ENCODE measurements at regions of chr20 and their contacts with region 1.

Region 1: GRCh38 chr20:48828022-48828743 is 384 bp upstream of the PREX1 start:
- DNase-seq: peak; percentile 78
- ATAC-seq: peak; percentile 14
- H3K4me3 Mint-ChIP-seq: peak overlapping the region; percentile 66
- H3K27ac Mint-ChIP-seq: peak overlapping the region; percentile 57
- H3K4me1 Mint-ChIP-seq: peaks cover 38% of the 10 kb centered on the region
- H3K27me3 Mint-ChIP-seq: peaks cover 21% of the 10 kb centered on the region

Region 2: DNA sequence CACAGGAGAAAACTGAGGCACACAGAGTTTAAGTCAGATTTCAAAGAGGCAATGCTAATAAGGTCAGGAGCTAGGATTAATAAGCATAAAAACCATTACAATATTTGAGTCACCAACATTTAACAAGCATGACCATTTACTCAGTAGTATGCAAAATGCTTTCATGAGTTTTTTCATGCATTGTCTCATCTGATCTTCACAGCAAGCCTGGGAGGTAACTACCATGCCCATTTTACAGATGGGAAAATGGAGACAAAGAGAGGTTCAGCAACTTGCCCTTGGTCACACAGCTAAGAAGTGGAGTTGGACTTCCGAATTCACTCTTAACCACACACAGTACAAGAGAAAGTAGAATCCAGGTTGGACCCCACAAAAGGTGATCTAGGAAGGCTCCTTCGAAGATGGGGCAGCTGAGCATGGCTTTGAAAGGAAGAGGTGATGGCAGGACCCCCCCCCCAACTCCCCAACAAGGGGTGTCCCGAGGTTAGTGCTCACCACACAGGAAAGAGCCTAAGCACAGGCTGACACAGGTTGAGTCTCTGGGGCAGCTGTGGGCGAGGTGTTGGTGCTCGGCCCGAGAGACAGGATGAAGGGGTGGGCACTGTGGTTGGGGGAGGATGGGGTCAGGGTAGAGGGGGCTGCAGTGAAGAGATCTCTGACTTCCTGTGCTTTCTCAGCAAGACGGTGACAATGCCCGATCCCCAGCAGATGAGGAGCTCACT is 109.2 kb before region 1 on chr20:
- CTCF ChIA-PET with region 1: no interaction called
- POLR2A ChIA-PET with region 1: no interaction called
- intact Hi-C with region 1: loop called (anchors 2 kb)
- DNase-seq: peak; percentile 42
- ATAC-seq: peak; percentile 19
- H3K4me3 Mint-ChIP-seq: no peak overlapping the region
- H3K27ac Mint-ChIP-seq: peak overlapping the region; percentile 70
- H3K4me1 Mint-ChIP-seq: peaks cover 72% of the 10 kb centered on the region
- H3K27me3 Mint-ChIP-seq: no peaks in the 10 kb centered on the region

Region 3: DNA sequence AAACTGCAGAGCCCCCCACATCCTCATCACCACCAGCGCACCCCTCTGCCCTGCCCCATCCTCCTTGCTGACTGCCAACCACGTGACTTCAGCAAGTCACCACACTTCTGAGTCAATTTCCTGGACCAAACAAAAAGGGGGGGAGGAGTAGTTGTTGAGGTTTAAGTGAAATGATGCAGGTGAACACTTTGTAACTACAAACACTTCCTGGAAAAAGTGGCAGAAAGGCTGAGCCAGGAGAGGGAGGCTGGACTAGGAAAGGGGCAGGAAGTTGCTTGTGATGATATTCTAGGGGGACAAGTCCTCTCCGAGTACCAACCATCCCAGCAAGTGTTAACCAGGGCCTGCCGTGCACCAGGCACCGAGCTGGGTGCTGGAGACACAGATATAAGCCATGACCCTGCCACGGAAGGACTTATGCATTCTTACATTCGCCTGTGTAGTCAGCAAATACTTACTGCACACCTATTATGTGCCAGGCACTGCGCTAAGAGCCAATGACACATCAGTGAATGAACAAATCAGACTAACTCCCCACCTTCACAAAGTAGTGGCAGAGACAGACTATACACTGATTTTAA is 67.7 kb before region 1 on chr20:
- CTCF ChIA-PET with region 1: interaction called, 4 read pairs
- POLR2A ChIA-PET with region 1: interaction called, 3 read pairs
- intact Hi-C with region 1: loop called (anchors 1 to 2 kb)
- DNase-seq: peak; percentile 78
- ATAC-seq: peak; percentile 87
- H3K4me3 Mint-ChIP-seq: peak overlapping the region; percentile 34
- H3K27ac Mint-ChIP-seq: peak overlapping the region; percentile 96
- H3K4me1 Mint-ChIP-seq: peaks cover 67% of the 10 kb centered on the region
- H3K27me3 Mint-ChIP-seq: no peaks in the 10 kb centered on the region

Region 4: DNA sequence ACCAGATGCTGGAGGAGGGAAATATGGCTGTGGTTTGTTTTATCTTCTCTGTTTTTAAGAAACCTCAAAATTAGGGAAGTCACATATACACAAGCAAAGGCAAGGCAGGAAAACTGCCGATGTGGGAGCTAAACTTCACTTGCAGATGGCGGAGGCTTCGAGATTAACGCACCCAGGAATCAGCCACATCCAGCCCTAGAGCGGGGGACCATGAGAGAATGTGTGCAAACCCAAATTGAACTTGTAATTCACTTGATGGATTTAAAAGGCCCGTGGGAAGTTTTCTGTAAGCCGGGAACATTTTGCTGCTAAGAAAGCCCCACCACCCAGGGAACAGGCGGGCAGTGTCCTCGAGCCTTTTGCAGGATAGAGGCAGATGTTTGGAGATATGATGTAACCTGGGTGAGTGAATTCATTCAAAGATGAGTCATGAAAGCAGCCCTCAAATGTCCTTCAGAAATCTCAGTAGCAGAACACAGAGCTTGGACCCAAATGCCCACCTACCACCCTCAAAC is 40.3 kb before region 1 on chr20:
- CTCF ChIA-PET with region 1: interaction called, 3 read pairs
- POLR2A ChIA-PET with region 1: interaction called, 4 read pairs
- intact Hi-C with region 1: loop called (anchors 1 kb)
- DNase-seq: no peak
- ATAC-seq: no peak
- H3K4me3 Mint-ChIP-seq: no peak overlapping the region
- H3K27ac Mint-ChIP-seq: peak overlapping the region; percentile 16
- H3K4me1 Mint-ChIP-seq: peaks cover 58% of the 10 kb centered on the region
- H3K27me3 Mint-ChIP-seq: no peaks in the 10 kb centered on the region

Region 5: GRCh38 chr20:48904365-48905296 is 76.4 kb after region 1 on chr20:
- CTCF ChIA-PET with region 1: no interaction called
- POLR2A ChIA-PET with region 1: no interaction called
- intact Hi-C with region 1: loop called in 1 of 2 experiments (anchors 5 kb)
- DNase-seq: peak; percentile 84
- ATAC-seq: peak; percentile 47
- H3K4me3 Mint-ChIP-seq: no peak overlapping the region
- H3K27ac Mint-ChIP-seq: peak overlapping the region; percentile 65
- H3K4me1 Mint-ChIP-seq: peaks cover 17% of the 10 kb centered on the region
- H3K27me3 Mint-ChIP-seq: peaks cover 2% of the 10 kb centered on the region